Left ventricle myocardium inferior (tissue), 1 donor: ENCODE measurements at regions of chr9 and their contacts with region 1.

Region 1: DNA sequence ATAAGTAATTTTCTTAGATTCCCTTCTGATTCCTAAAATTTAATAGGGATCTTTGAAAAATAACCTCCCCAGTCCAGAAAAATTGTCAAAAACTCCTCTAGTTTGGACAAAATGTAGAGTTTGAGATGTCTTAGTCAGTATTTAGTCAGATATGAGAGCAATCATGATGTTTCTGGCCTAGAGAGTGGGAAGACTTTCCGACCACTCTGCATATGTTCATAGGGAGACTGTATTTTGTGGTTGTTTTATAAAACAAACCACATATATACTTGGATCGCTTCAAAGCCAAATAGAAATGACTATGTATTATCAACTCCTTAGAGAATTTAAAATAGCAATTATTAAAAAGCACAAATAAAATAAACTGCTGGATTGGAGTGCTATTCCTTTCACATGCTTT is 15.8 kb downstream of the ZFAND5 start:
- DNase-seq: no peak
- H3K4me3 ChIP-seq: no peak overlapping the region
- H3K27ac ChIP-seq: no peak overlapping the region
- H3K4me1 ChIP-seq: peaks cover 17% of the 10 kb centered on the region
- H3K27me3 ChIP-seq: no peaks in the 10 kb centered on the region
- CTCF ChIP-seq: no peak

Region 2: GRCh38 chr9:72292256-72292682 is 57.0 kb before region 1 on chr9:
- intact Hi-C with region 1: loop called (anchors 10 kb)
- DNase-seq: no peak
- H3K4me3 ChIP-seq: no peak overlapping the region
- H3K27ac ChIP-seq: peak overlapping the region; percentile 4
- H3K4me1 ChIP-seq: peaks cover 8% of the 10 kb centered on the region
- H3K27me3 ChIP-seq: no peaks in the 10 kb centered on the region
- CTCF ChIP-seq: peak; percentile 74